ENCODE measurements at regions of chr4 and their contacts with region 1.

Region 1: DNA sequence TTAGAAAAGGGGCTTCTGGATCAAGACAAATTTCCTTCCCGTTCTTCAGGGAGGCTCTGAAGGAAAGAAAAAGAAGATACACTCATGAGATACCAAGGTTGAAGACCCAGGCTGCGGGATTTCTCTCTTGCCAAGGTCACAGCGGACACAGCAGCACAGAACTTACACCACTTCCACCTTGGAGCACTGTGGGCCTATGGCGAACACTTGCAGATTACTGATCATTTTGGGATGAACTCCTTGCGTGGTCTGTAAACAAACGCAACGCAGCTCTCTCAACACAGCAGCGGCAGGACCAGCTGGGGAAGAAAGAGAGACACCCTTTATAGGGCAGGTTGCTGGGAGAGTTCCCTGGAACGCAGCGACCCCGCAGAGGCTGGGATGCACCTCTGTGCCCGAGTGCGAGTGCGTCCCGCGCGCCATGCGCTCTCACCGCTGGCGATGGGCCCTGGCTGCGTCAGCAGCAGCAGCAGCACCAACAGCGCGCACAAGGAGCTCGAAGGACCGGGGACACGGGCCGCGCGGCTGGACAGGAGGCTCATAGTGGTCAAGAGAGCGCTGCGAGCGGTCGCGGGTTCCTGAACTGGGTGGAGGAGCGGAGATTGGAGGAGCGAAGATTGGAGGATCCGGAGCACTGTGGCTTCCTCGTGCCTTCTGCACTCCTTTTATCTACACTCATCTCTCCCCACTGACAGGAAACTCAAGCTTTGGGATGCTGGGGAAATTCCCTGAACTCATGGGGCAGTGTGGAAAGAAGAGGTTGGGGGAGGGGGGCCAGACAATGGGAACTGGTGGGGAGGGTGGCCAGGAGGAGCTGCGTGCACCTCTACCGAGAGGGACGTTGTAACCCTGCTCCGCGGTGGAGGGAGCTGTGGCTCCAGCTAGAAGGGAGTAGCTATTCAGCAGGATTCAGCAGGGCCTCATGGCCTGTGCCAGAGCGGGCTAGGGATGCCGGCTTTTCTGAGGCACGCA is at the start of gene CXCL5:
- DNase-seq: peak; percentile 61 to 79
- ATAC-seq: peak; percentile 65
- H3K4me3 ChIP-seq: no peak within 1 kb of the TSS
- H3K27ac ChIP-seq: no peak within 1 kb of the TSS
- H3K4me1 ChIP-seq: no peaks in the 10 kb centered on the region
- H3K27me3 ChIP-seq: no peaks in the 10 kb centered on the region
- total RNA-seq, gene CXCL5: 0.57 TPM in 1 of 2 donors, not detected in the other

Region 2: DNA sequence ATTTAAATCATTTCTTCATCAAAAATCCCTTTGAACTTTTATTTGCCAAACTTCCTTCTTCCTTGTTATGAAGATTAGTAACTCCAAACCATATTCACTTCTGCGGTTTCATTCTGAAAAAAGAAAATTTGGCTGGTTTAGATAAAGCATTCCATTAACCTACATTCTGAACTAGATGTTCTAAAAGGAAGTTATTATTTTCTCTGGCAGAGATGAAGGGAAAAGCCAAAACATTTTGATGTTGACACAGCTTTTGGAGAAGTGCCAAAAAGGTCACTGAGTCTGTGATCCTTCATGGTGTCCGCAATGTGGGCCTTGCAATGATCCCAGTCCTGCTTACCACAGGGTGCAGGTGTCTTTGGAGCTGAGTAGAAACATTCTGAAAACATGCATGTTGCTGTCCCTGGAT is 222.0 kb before region 1 on chr4:
- intact Hi-C with region 1: no loop called
- DNase-seq: no peak
- ATAC-seq: no peak
- H3K4me3 ChIP-seq: no peak overlapping the region
- H3K27ac ChIP-seq: no peak overlapping the region
- H3K4me1 ChIP-seq: peaks cover 0 to 3% of the 10 kb centered on the region in 2 donors
- H3K27me3 ChIP-seq: no peaks in the 10 kb centered on the region

Region 3: DNA sequence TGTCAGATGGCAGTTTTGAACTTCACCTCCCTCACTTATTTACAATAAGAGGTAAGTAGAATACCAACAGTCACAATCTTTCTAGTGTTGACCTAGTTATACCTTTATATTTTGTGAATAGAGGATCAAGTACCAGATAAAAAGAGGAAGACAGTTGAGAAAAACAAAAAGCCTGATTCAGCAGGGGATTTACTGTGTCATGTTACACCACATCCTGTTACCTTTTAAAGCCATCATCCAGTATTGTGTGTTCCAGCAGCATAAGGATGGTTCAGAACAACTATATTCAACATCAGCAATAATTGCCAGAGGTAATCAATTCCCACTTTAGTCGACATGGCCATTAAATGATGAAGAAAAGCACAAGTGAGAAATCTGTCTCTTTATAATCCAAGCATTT is 183.2 kb before region 1 on chr4:
- intact Hi-C with region 1: no loop called
- DNase-seq: no peak
- ATAC-seq: no peak
- H3K4me3 ChIP-seq: no peak overlapping the region
- H3K27ac ChIP-seq: no peak overlapping the region
- H3K4me1 ChIP-seq: peaks cover 0 to 2% of the 10 kb centered on the region in 2 donors
- H3K27me3 ChIP-seq: no peaks in the 10 kb centered on the region

Region 4: GRCh38 chr4:74042681-74043080 is 44.4 kb after region 1 on chr4:
- intact Hi-C with region 1: loop called in 1 of 2 experiments (anchors 10 kb)
- DNase-seq: no peak
- ATAC-seq: no peak
- H3K4me3 ChIP-seq: no peak overlapping the region
- H3K27ac ChIP-seq: no peak overlapping the region
- H3K4me1 ChIP-seq: no peaks in the 10 kb centered on the region
- H3K27me3 ChIP-seq: no peaks in the 10 kb centered on the region

Measured in aorta (tissue), 5 donors.